OCI-LY7 (cell line): ENCODE measurements at regions of chr10 and their contacts with region 1.

Region 1: DNA sequence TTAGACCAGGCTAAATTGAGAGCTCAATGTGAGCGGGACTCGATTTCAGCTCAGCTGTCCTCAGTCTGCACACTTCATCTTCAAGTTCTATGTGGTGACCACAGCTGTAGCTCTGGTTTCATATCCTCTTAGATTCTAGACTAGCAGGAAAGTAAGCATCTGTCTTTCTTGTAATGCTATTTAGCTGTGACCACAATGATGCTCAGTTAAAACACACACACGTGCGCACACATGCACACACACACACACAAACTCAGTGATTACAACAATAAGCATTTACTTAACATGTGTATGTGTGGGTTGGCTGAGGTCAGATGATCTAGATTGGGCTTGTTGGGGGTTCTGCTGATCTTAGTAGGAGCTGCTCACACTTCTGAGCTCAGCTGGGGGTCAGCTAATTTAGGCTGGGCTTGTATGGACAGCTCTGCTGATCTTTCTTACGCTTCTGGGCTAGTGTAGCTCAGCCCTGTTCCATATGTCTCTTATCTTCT is 82.5 kb downstream of the ZNF365 start:
- DNase-seq: peak; percentile 97
- H3K4me3 ChIP-seq: peak overlapping the region; percentile 14
- H3K27ac ChIP-seq: peak overlapping the region; percentile 80
- H3K4me1 ChIP-seq: peaks cover 49% of the 10 kb centered on the region
- CTCF ChIP-seq: no peak

Region 2: DNA sequence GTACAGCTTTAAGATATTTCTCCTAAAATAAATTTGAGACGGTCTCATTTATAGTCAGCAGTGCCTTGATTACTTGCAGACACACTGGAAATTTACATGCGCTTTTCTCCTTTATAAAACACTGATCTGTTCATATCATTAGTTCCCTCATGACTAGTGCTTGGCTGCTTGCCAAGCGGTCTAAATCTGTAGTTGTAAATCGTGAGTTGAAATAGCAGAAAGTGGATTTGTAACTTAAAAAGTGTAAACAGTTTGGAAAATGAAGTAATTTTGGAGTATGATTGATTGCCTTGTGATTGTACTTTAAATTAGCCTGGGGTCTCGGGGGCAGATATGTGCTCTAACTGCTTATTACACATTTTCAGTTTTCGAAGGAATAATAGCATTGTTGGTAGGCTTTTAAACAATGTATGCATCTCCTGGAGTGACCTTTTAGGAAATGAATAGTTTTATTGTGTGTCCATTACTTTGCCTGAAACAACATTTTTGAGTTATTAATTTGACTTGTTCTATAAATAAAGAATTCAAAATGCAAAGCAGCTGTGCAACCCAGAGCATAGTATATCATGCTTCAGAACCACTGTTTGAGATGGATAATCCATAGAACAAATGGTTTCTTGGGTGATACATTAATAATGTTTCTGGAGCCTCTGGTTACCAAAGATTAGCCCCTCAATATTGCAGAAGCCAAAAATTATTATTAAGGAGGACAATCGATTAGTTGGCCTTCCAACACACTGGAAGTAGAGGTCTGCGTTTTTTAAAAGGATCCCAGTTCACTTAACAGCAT is 481.9 kb before region 1 on chr10:
- CTCF ChIA-PET with region 1: no interaction called
- POLR2A ChIA-PET with region 1: no interaction called
- intact Hi-C with region 1: loop called (anchors 10 kb)
- DNase-seq: peak; percentile 77
- H3K4me3 ChIP-seq: peak overlapping the region; percentile 50
- H3K27ac ChIP-seq: peak overlapping the region; percentile 86
- H3K4me1 ChIP-seq: peaks cover 80% of the 10 kb centered on the region
- CTCF ChIP-seq: no peak

Region 3: DNA sequence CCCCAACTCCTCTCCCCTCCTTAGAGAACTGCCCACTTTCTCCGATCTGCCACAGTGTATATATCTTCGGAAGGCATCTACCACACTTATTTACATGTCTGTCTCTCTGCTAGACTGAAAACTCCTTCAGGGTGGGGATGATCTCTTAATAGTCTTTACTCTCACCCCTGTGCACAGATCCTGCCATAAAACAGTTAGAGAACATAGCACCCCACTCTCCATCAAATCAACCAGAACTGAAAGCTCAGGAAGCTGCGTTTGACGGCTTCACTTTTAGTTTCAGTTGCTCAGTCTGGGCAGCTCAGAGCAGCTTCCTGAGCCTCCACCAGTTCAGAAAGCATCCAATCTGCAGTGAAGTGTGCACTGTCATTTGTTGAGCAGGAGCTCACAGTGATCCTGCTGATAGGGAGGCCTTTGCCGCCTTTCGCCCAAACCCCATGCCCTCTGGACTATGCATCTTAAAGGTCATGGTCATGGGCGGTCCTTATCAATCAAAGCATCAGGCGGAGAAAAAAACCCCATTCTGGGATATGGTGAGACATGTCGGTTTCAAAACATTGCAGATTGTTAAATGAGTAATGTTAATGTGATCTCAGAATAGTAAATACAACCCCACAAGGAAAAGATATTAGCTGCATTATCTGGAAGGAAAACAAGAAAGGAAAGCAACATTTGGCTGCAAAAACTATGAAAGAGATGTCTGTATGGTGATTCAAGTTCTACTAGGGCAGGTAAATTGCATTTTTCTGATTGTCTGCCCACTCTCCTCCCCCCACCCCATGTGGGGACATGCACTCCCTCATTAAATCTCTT is 180.8 kb after region 1 on chr10:
- CTCF ChIA-PET with region 1: no interaction called
- POLR2A ChIA-PET with region 1: no interaction called
- intact Hi-C with region 1: no loop called
- DNase-seq: peak; percentile 82
- H3K4me3 ChIP-seq: peak overlapping the region; percentile 63
- H3K27ac ChIP-seq: peak overlapping the region; percentile 90
- H3K4me1 ChIP-seq: peaks cover 87% of the 10 kb centered on the region
- CTCF ChIP-seq: no peak